H1 (cell line): ENCODE measurements at regions of chr6 and their contacts with region 1.

Region 1: DNA sequence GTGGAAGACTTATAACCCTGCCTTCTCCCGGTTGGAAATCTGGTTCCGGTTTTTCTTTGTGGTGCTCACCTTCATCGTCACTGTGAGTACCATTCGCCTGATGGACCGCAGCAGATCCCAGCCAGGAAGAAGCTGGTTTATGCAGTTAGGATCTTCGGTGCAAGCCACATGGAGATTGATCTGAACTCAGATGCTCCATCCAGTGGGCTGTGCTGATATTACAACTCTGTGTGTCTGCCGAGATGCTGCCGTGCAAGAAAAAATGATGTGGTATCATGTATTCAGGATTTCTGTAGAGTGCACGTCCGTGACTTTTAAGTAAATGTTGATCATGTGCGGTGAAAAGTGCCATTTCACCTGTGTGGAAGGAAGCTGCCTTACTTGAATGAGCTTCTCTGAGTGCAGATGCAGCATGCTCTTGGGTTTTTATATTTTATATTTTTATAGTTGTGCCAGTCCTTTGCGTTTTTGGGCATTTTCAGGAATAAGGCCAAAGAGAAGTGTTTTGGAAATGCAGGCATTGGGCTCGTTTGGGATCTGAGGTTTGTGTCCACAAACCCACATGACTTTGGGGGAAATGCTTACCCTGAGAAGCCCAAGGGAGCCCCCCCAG is 39.2 kb downstream of the DYNLT1 start:
- DNase-seq: peak; percentile 39 to 86
- H3K4me3 ChIP-seq: no peak overlapping the region
- H3K27ac ChIP-seq: no peak overlapping the region
- H3K4me1 ChIP-seq: no peaks in the 10 kb centered on the region
- H3K27me3 ChIP-seq: no peaks in the 10 kb centered on the region
- CTCF ChIP-seq: peak; percentile 43 to 84 (median 73)
- EP300 ChIP-seq: no peak
- POLR2A ChIP-seq: no peak
- RAD21 ChIP-seq: peak; percentile 72 to 78

Region 2: GRCh38 chr6:157946865-157947532 is 658.4 kb before region 1 on chr6:
- CTCF ChIA-PET with region 1: no interaction called
- POLR2A ChIA-PET with region 1: no interaction called
- DNase-seq: no peak
- H3K4me3 ChIP-seq: no peak overlapping the region
- H3K27ac ChIP-seq: no peak overlapping the region
- H3K4me1 ChIP-seq: no peaks in the 10 kb centered on the region
- H3K27me3 ChIP-seq: no peaks in the 10 kb centered on the region
- CTCF ChIP-seq: peak in 2 of 3 experiments; percentile 65 to 82; a peak in 3 of 4 replicates
- EP300 ChIP-seq: no peak
- POLR2A ChIP-seq: peak in 1 of 2 experiments; percentile 20; a peak in 1 of 3 replicates
- RAD21 ChIP-seq: peak; percentile 91 to 93

Region 3: GRCh38 chr6:158213925-158214674 is 391.3 kb before region 1 on chr6:
- CTCF ChIA-PET with region 1: interaction called, 13 read pairs
- POLR2A ChIA-PET with region 1: no interaction called
- DNase-seq: no peak
- H3K4me3 ChIP-seq: no peak overlapping the region
- H3K27ac ChIP-seq: no peak overlapping the region
- H3K4me1 ChIP-seq: no peaks in the 10 kb centered on the region
- H3K27me3 ChIP-seq: no peaks in the 10 kb centered on the region
- CTCF ChIP-seq: peak; percentile 38 to 86 (median 79)
- EP300 ChIP-seq: no peak
- POLR2A ChIP-seq: no peak
- RAD21 ChIP-seq: peak; percentile 93 to 94

Region 4: DNA sequence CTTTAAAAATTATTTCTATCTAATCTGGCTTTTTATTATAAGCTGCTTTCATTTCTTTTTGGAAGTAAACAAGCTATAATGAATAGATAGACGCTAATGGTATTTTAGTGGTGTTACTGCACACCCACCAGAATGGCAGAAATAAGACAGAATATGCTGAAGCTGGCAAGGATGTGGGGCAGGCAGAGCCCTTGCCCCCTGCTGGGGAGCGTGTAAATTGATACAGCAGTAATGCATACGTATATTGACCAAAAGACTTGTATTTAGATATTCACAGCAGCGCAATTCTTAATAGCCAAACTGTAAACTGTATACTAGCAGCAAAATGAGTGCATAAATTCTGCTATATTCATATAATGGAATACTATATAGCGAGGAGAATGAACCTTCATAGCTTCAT is 10.1 kb before region 1 on chr6:
- CTCF ChIA-PET with region 1: interaction called, 13 read pairs
- POLR2A ChIA-PET with region 1: interaction called, 4 read pairs
- DNase-seq: no peak
- H3K4me3 ChIP-seq: no peak overlapping the region
- H3K27ac ChIP-seq: no peak overlapping the region
- H3K4me1 ChIP-seq: no peaks in the 10 kb centered on the region
- H3K27me3 ChIP-seq: no peaks in the 10 kb centered on the region; a peak in 1 of 7 replicates
- CTCF ChIP-seq: no peak
- EP300 ChIP-seq: no peak
- POLR2A ChIP-seq: no peak
- RAD21 ChIP-seq: no peak

Region 5: GRCh38 chr6:158631678-158632537 is 26.5 kb after region 1 on chr6:
- CTCF ChIA-PET with region 1: interaction called, 10 read pairs
- POLR2A ChIA-PET with region 1: interaction called, 3 read pairs
- DNase-seq: no peak
- H3K4me3 ChIP-seq: no peak overlapping the region
- H3K27ac ChIP-seq: no peak overlapping the region
- H3K4me1 ChIP-seq: peaks cover 0 to 7% (median 0%) of the 10 kb centered on the region in 4 experiments; a peak in 3 of 7 replicates
- H3K27me3 ChIP-seq: no peaks in the 10 kb centered on the region
- CTCF ChIP-seq: no peak
- EP300 ChIP-seq: no peak
- POLR2A ChIP-seq: no peak
- RAD21 ChIP-seq: no peak

Region 6: DNA sequence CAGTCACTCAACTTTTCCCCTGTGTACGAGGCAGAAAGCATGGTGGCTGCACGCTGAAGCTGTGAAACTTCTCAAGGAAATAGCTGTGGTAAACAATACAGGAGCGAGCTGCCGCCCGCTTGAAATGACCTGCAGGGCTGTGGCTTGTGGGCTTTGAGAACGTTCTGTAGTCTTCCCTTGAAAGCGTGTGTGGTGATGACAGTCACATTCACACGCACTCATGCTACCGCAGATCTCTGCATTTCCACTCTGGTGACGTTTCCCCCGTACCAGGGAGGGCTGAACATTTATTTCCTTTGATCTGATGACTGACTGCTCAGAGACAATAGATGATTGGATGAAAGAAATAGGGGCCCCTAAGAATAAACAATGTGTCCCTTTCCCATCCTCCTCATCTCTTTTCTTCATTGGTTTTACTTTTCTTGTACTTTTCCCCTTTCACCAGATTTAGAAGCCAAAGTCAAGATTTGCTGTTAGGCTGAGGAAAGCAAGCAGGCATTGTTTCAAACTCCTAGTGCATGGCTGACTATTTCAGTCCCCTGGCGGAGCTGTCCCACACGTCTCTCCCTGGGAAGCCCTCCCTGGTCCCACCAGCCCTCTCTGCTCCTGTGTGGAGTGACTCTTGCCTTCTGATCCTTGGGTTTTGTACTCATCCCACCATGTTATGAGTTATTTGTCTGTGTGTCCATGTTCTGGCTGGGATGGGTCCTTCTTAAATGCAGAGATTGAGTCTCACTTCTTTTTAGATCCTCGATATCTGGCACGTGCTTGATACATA is 48.4 kb after region 1 on chr6:
- CTCF ChIA-PET with region 1: no interaction called
- POLR2A ChIA-PET with region 1: no interaction called
- DNase-seq: no peak
- H3K4me3 ChIP-seq: no peak overlapping the region
- H3K27ac ChIP-seq: no peak overlapping the region
- H3K4me1 ChIP-seq: no peaks in the 10 kb centered on the region
- H3K27me3 ChIP-seq: no peaks in the 10 kb centered on the region
- CTCF ChIP-seq: no peak
- EP300 ChIP-seq: no peak
- POLR2A ChIP-seq: no peak
- RAD21 ChIP-seq: no peak